Right lobe of liver (tissue), 6 donors: ENCODE measurements at regions of chr17 and their contacts with region 1.

Region 1: DNA sequence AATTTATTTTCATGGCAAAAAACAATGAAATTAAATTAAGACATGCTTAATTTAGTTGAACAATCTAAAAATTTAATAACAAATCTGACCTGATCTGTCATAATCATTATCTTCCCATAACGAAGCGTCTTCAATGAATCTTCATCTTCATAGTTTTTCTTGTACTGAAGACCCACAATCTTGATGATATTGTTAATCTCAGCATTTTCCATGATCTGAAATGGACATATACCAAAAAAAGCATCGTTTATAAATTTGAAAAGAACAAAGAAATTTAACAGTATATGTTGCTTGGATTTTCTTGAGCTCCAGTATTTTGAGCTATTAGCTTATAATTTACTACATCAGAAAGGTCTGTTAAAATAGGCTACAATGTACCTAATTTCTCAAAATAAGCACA is 10.2 kb downstream of the TOP2A start:
- DNase-seq: no peak
- ATAC-seq: no peak
- H3K4me3 ChIP-seq: no peak overlapping the region
- H3K27ac ChIP-seq: no peak overlapping the region
- H3K4me1 ChIP-seq: peaks cover 0 to 6% (median 0%) of the 10 kb centered on the region in 4 donors
- H3K27me3 ChIP-seq: no peaks in the 10 kb centered on the region
- CTCF ChIP-seq: no peak
- POLR2A ChIP-seq: no peak

Region 2: GRCh38 chr17:40371261-40371929 is 36.1 kb before region 1 on chr17:
- intact Hi-C with region 1: loop called in 1 of 2 experiments (anchors 5 kb)
- DNase-seq: no peak
- ATAC-seq: peak in 2 of 4 donors; percentile 45 to 64
- H3K4me3 ChIP-seq: no peak overlapping the region
- H3K27ac ChIP-seq: no peak overlapping the region
- H3K4me1 ChIP-seq: no peaks in the 10 kb centered on the region
- H3K27me3 ChIP-seq: no peaks in the 10 kb centered on the region
- CTCF ChIP-seq: no peak
- POLR2A ChIP-seq: no peak